ENCODE measurements at regions of chr19 and their contacts with region 1.

Region 1: GRCh38 chr19:29212648-29213573 is at the start of gene UQCRFS1:
- DNase-seq: peak; percentile 97
- H3K4me3 Mint-ChIP-seq: peak within 1 kb of the TSS; percentile 95
- H3K27ac Mint-ChIP-seq: peak within 1 kb of the TSS; percentile 93
- H3K4me1 Mint-ChIP-seq: peaks cover 39% of the 10 kb centered on the region
- H3K27me3 Mint-ChIP-seq: peaks cover 2% of the 10 kb centered on the region
- total RNA-seq, gene UQCRFS1: 40.3 and 43.6 TPM in 2 replicates

Region 2: DNA sequence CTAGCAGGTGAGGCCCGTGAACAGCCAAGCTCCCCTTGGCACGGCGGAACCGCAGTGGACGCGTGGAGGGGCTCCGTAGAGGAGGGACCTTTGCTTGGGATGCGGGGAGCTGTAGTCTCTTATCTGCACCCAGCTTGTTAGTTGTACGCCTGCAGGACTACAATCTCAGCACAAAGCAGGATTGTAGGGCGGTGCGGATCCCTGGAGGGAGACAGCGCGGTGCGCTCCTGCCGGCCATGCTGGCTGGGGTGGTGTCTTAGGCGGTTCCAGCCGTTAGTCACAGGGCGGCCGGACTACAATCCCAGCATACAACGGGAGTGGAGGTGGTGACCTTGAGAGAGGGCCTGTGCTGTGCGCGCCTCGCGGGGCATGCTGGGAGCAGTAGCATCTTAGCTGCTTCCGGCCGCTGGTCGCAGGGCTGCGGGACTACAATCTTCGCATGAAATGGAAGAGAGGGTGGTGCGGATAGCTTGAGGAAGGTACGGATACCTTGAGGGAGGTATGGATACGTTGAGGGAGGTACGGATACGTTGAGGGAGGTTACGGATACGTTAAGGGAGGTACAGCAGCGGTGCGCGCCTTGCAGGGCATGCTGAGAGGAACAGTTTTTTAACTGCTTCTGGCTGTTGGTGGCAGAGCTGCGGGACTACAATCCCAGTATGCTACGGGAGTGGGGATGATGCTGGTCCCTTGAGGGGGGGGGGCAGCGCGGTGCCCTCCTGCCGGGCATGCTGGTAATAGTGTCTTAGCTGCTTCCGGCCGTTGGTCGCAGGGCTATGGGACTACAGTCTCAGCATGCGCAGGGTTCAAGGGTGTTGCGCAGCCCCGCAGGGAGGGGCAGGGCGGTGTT is 1419.0 kb before region 1 on chr19:
- intact Hi-C with region 1: loop called (anchors 1 kb)
- DNase-seq: peak; percentile 89
- H3K4me3 Mint-ChIP-seq: peak overlapping the region; percentile 100
- H3K27ac Mint-ChIP-seq: peak overlapping the region; percentile 98
- H3K4me1 Mint-ChIP-seq: peaks cover 19% of the 10 kb centered on the region
- H3K27me3 Mint-ChIP-seq: no peaks in the 10 kb centered on the region

Region 3: GRCh38 chr19:29263305-29264135 is 50.6 kb after region 1 on chr19:
- intact Hi-C with region 1: loop called (anchors 2 kb)
- DNase-seq: peak; percentile 14
- H3K4me3 Mint-ChIP-seq: no peak overlapping the region
- H3K27ac Mint-ChIP-seq: no peak overlapping the region
- H3K4me1 Mint-ChIP-seq: peaks cover 4% of the 10 kb centered on the region
- H3K27me3 Mint-ChIP-seq: peaks cover 14% of the 10 kb centered on the region

Region 4: DNA sequence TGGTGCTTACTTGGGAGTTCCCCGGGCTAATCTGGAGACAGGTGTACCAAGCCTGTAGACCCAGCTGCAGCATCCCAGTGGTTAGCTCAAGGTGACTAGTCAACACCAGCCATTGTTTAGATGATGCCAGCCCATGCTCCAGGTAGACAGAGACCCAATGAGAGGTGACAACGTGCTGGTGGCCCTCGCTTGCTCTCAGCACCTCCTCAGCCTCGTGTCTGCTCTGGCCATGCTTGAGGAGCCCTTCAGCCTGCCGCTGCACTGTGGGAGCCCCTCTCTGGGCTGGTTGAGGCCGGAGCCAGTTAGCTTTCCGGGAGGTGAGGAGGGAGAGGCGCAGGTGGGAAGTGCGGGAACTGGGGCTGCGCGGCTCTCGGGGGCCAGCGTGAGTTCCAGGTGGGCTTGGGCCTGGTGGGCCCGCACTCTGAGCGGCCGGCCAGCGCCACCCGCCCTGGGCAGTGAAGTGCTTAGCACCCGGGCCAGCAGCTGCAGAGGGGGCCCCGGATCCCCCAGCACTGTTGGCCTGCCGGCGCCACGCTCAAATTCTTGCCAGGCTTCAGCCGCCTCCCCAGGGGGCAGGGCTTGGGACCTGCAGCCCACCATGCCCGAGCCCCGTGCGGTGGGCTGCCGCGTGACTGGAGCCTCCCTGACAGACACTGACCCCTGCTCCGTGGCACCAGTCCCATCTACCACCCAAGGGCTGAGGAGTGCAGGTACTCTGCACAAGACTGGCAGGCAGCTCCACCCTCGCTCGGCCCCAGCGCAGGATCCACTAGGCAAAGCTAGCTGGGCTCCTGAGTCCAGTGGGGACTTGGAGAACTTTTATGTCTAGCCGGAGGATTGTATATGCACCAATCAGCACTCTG is 227.0 kb after region 1 on chr19:
- intact Hi-C with region 1: no loop called
- DNase-seq: no peak
- H3K4me3 Mint-ChIP-seq: no peak overlapping the region
- H3K27ac Mint-ChIP-seq: no peak overlapping the region
- H3K4me1 Mint-ChIP-seq: no peaks in the 10 kb centered on the region
- H3K27me3 Mint-ChIP-seq: no peaks in the 10 kb centered on the region